ENCODE measurements at regions of chr12 and their contacts with region 1.

Region 1: GRCh38 chr12:75334384-75335030 is at the start of gene GLIPR1L1:
- DNase-seq: peak; percentile 82
- ATAC-seq: peak; percentile 85
- total RNA-seq, gene GLIPR1L1: not detected

Region 2: GRCh38 chr12:74816398-74817168 is 517.9 kb before region 1 on chr12:
- intact Hi-C with region 1: no loop called
- DNase-seq: no peak
- ATAC-seq: no peak

Region 3: DNA sequence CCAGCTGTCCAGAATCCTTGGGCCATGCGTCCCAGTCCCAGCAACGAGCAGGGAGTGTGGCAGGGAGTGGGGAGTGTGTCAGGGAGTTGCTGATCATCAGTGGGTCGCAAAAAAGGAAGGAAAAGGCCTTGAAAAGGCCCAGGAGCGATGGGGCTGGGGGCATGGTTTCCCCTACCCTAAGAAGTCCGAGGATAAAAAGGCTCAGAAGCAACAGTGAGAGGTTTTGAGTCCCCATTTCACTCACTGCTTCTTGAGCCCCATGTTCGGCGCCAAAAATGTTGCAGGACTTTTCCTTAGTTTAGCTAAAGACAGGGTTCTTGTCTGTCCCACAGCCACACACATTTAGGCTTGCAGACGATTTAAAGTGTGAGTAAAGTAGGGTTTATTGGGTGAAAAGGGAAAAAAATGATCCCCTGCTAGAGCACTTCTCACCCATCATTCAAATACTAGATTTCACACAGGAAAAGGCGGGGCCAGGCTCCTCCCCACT is 314.4 kb before region 1 on chr12:
- intact Hi-C with region 1: no loop called
- DNase-seq: no peak
- ATAC-seq: no peak

Region 4: GRCh38 chr12:75489613-75490210 is 155.2 kb after region 1 on chr12:
- intact Hi-C with region 1: loop called (anchors 5 kb)
- DNase-seq: no peak
- ATAC-seq: no peak

Region 5: DNA sequence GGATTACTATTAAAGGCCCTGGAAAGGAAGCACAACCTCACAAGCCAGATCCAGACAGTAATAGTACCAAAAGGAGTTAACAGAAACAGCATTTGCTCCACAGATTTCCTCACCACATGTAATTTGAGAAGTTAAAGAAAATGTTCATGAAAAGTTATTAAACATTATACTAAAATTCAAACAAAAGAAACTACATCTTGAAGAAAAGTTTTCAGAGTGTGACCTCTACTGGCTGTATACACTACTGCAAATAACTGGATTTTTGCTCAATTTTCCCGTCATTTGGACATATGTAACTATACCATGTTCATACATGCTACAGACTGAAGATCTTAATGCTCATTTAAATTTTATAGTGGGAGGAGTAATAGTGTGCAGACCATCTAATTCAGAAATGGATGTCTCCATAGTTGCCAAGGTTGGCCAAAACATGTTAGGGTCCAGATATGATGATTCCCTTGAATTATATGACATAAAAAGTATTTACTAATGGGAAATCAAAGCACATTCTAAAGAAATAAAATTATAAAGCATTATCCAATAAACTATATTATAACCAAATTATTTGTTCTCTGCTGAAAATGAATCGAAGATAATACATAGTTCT is 171.3 kb after region 1 on chr12:
- intact Hi-C with region 1: loop called (anchors 5 kb)
- DNase-seq: no peak
- ATAC-seq: no peak

Region 6: DNA sequence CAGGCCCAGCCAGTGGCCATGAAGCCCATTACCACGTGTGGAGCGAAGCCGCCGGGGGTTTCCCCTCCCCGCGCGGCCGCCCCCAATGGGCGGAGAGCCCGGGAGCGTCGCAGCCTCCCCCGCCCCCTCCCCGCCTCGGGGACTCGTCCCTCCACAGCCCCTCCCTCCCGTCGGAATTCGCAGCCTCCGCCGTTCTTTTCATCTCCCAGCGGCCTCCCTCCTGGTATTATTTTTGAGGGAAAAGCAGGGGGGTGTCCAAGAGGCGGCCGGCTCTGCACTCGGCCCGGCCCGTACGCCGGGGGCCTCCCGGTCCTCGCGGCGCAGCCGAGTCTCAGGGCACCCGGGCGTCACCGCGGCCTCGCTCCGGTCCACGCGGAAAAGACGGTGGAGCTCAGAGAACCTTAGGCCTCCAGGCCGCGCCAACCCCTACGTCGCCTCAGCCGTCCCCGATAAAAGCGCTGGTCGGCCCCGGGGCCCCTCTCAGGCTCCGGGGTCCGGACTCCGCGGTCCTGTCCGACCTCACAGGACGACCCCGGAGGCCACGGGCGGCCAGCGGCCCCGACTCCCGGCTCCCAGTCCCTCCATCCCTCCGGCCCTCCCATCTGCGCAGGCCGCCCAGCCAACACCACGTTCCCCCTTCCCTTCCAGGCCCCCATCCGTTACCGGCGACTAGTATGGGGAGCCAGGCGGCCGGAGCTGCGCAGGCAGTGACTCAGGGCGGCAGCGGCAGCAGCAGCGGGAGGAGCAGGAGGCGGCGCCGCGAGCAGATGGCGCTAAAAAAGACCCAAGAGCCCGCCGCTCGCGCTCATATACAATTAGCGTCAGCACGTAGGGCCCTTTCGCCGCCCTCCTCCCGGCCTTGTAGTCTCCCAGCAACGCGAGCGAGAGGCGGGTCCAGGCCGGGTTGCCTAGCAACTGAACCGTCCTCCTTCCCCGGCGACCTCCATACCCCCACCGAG is 749.7 kb after region 1 on chr12 and contains the start of gene NAP1L1:
- intact Hi-C with region 1: no loop called
- DNase-seq: peak; percentile 99
- ATAC-seq: peak; percentile 97
- total RNA-seq, gene NAP1L1: 267 TPM